ENCODE measurements at regions of chr16 and their contacts with region 1.

Region 1: GRCh38 chr16:63415014-63415413 is 1378.8 kb upstream of the CDH8 start:
- DNase-seq: no peak
- H3K4me3 ChIP-seq: no peak overlapping the region
- H3K27ac ChIP-seq: no peak overlapping the region
- H3K4me1 ChIP-seq: no peaks in the 10 kb centered on the region
- H3K27me3 ChIP-seq: no peaks in the 10 kb centered on the region
- CTCF ChIP-seq: no peak
- EP300 ChIP-seq: no peak
- POLR2A ChIP-seq: no peak

Region 2: DNA sequence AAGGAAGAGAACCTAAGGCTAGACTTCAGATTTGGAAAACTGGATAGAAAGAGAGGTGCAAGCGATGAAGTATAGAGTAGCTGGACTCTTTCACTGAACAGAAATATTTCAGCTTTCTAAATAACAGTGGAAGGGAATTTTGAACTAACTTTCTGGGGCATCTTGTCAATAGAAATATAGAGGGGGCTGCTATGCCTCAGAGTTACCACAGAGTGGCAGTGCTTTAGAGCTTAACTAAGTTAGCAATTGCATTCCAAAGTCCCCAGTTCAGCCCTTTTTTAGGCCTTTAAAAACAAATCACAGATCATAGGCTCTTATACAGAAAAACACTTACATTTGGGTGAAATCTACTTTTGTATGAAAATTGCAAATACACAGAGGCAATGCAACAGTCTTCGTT is 1224.6 kb before region 1 on chr16:
- intact Hi-C with region 1: loop called (anchors 10 kb)
- DNase-seq: peak in 1 of 2 donors; percentile 23
- H3K4me3 ChIP-seq: no peak overlapping the region
- H3K27ac ChIP-seq: no peak overlapping the region
- H3K4me1 ChIP-seq: no peaks in the 10 kb centered on the region
- H3K27me3 ChIP-seq: no peaks in the 10 kb centered on the region
- CTCF ChIP-seq: peak in 1 of 7 experiments; percentile 15
- EP300 ChIP-seq: no peak
- POLR2A ChIP-seq: no peak

Region 3: GRCh38 chr16:63337264-63337663 is 77.8 kb before region 1 on chr16:
- intact Hi-C with region 1: no loop called
- DNase-seq: no peak
- H3K4me3 ChIP-seq: no peak overlapping the region
- H3K27ac ChIP-seq: no peak overlapping the region
- H3K4me1 ChIP-seq: no peaks in the 10 kb centered on the region
- H3K27me3 ChIP-seq: no peaks in the 10 kb centered on the region
- CTCF ChIP-seq: no peak
- EP300 ChIP-seq: no peak
- POLR2A ChIP-seq: no peak

Measured in stomach (tissue), 19 donors.